Activated B cell treated with CpG ODN at 0.5 μM for 24 hours (primary cell): ENCODE measurements at regions of chr1 and their contacts with region 1.

Region 1: GRCh38 chr1:51482881-51483280 is 36.2 kb downstream of the EPS15 start:
- DNase-seq: no peak
- ATAC-seq: no peak
- H3K4me3 Mint-ChIP-seq: no peak overlapping the region
- H3K27ac Mint-ChIP-seq: no peak overlapping the region
- H3K4me1 Mint-ChIP-seq: peaks cover 26% of the 10 kb centered on the region
- H3K27me3 Mint-ChIP-seq: no peaks in the 10 kb centered on the region
- CTCF ChIP-seq: no peak

Region 2: GRCh38 chr1:51497340-51497739 is 14.5 kb after region 1 on chr1:
- CTCF ChIA-PET with region 1: no interaction called
- POLR2A ChIA-PET with region 1: interaction called, 3 read pairs
- intact Hi-C with region 1: loop called (anchors 2 kb)
- DNase-seq: no peak
- ATAC-seq: no peak
- H3K4me3 Mint-ChIP-seq: no peak overlapping the region
- H3K27ac Mint-ChIP-seq: no peak overlapping the region
- H3K4me1 Mint-ChIP-seq: peaks cover 78% of the 10 kb centered on the region
- H3K27me3 Mint-ChIP-seq: no peaks in the 10 kb centered on the region
- CTCF ChIP-seq: no peak